ENCODE measurements at regions of chr2 and their contacts with region 1.

Region 1: DNA sequence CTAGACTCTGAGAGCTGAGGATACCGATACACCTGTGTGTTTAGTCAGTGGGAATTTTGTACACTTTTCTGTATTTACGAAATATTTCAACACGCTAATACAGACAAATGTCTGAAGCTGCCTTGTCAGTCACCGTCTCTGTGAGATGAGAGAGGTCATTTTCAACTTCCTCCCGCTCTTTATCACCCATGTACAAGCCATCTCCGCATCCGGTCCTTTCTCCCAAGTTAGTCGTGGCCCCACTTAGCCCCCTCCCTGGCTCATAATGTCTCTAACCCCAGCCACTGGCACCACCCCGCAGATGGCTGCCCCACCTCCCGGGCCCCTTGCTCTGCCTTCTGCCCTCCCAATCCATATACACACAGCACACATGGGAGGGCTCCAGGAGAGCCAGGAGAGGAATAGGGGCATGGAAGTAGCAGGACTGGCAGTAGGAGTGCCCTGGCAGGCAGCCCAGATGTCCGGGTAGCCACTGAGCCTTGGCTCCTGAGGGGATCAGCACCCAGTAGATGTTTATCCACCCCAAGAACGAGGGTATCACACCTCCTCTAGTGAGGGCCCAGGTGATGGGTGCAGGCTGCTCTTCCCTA is 2.0 kb upstream of the RUFY4 start:
- DNase-seq: peak; percentile 47
- H3K4me3 ChIP-seq: no peak overlapping the region
- H3K27ac ChIP-seq: no peak overlapping the region
- H3K4me1 ChIP-seq: peaks cover 0 to 16% of the 10 kb centered on the region in 2 experiments; a peak in 1 of 4 replicates
- H3K27me3 ChIP-seq: peaks cover 17% of the 10 kb centered on the region; the same call in 1 of the 2 replicates
- CTCF ChIP-seq: no peak
- EP300 ChIP-seq: no peak
- RAD21 ChIP-seq: no peak

Region 2: DNA sequence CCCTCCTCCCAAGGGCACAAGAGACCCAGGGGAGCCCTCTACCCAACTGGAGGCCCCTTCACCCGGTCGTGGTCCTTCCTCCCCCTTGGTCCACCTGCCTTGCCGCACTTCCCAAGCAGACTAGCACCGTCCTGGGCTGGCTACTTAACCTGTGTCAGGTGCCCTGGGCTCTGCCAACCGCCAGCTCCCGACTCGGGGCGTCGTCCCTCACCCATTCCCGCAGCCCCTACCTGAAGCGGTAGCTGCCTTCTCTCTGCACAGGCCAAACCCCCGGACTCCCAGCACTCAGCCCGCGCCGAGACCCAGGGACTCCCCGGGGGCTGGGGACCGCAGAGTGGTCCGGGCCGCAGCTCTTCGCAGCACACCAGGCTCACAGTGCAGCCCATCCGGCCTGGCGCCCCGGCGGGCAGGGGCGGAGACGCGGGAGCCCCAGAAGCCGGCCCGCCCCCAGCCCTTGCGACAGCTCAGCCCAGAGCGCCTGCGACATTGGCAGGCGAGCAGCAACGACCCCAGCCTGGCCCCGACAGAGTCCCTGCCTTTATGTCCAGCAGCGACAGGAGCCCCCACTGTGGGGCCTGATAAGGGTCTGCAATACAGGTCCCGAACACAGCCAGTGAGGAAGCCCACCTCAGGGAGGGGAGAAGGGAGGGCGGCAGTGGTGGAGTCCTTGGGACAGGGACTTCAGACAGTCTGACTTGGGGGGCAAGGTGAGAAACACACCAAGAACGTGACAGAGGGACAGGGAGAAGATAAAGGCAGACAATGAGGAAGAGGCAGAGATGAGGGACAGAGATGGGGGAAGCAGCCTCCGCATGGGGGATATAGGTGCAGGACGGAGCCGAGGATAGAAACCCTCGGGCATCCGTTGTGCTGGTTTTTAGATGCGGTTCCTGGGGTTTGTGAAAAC is 33.2 kb before region 1 on chr2:
- CTCF ChIA-PET with region 1: interaction called, 15 read pairs
- POLR2A ChIA-PET with region 1: interaction called, 4 read pairs
- DNase-seq: no peak
- H3K4me3 ChIP-seq: no peak overlapping the region
- H3K27ac ChIP-seq: no peak overlapping the region
- H3K4me1 ChIP-seq: peaks cover 0 to 24% of the 10 kb centered on the region in 2 experiments; a peak in 1 of 4 replicates
- H3K27me3 ChIP-seq: no peaks in the 10 kb centered on the region
- CTCF ChIP-seq: no peak
- EP300 ChIP-seq: no peak
- RAD21 ChIP-seq: no peak

Region 3: DNA sequence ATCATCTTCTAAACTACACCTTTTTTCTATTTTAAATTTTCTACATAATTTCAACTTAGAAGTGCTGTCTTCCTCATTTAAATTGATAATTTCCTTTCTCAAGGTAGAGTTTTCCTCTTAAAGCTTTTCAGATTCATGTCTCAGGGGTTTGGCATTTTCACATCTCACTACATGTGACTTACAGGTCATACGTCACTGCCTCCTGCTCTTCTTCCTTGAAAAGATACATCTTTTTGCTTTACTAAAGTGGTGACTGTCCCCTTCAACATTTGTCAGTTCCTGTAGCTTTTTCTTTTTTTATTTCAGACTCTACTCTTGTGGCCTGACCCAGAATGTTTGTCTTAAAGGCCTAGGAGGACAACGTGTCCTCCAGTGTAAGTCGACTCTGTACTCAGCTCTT is 15.1 kb before region 1 on chr2:
- CTCF ChIA-PET with region 1: interaction called, 12 read pairs
- POLR2A ChIA-PET with region 1: no interaction called
- DNase-seq: no peak
- H3K4me3 ChIP-seq: no peak overlapping the region
- H3K27ac ChIP-seq: no peak overlapping the region
- H3K4me1 ChIP-seq: peaks cover 0 to 8% of the 10 kb centered on the region in 2 experiments; a peak in 1 of 4 replicates
- H3K27me3 ChIP-seq: peaks cover 7% of the 10 kb centered on the region; the same call in 1 of the 2 replicates
- CTCF ChIP-seq: no peak
- EP300 ChIP-seq: no peak
- RAD21 ChIP-seq: no peak

Measured in SK-N-SH (cell line).